AG04449 (cell line): ENCODE measurements at regions of chr14 and their contacts with region 1.

Region 1: DNA sequence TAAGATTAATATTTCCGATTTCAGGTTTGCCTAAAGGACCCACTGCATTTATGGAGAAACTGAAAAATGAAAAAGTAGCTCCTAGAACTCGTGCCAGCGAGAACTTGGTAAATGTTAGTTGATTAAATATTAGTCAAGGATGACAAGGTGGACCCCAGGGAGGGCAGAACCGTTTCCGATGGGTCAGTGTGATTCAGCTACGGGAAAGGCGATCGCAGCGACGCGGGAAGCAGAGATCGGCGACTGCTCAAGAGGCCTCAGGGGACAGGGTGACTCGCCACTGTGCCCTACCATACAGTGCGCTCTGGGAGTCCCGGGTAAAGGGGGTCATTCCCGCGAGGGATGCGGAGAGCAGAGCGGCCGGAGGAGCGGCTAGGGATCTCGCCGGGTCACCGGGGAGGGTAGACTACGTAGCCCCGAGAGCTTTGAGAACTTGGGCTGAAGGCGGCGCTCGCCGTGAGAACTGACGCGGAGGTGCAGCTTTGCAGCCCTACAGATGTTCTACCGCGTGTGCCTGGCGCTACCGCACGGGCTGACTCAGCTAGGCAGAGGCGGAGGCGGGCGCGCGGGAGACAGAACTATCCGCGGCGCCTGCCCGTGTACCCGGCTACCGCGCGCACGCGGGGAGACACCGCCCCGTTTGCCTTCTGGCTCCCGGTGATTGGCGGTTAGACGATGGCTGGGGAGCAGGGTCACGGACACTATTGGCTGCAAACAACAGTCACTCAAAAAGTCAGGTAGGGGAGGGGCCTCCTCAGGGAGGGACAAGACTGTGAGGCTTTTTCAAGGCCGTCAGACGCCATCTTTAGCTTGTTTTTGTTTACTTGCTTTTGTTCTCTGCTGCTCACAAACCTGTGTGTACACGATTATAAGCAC is 3.2 kb downstream of the C14orf93 start:
- DNase-seq: peak; percentile 86
- H3K4me3 ChIP-seq: peak overlapping the region; percentile 70
- CTCF ChIP-seq: peak; percentile 54

Region 2: DNA sequence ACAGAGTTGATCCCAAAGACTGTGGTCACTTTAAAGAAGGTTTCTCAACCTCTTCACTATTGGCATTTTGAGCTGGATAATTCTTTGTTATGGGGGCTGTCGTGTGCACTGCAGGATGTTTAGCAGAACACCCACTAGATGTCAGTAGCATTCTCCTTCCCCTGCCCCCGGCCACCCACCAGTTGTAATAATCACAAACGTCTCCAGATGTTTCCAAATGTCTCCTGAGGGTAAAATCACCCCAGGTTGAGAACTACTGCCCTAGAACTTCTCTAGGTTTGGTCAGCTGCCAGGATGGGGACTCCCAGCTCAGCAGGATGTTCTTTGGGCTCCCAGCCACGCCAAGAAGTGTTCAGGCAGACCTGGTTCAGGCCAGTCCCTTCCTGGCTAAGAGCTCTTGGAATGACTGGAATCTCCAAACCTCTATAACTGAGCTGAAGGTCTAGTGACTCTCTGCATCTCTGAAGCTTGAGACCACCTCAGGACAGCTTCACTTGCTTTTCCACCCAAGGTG is 12.0 kb before region 1 on chr14:
- CTCF ChIA-PET with region 1: interaction called, 70 read pairs
- POLR2A ChIA-PET with region 1: interaction called, 14 read pairs
- DNase-seq: no peak
- H3K4me3 ChIP-seq: no peak overlapping the region
- CTCF ChIP-seq: peak; percentile 65

Region 3: GRCh38 chr14:23025151-23025814 is 18.5 kb after region 1 on chr14:
- CTCF ChIA-PET with region 1: interaction called, 15 read pairs
- POLR2A ChIA-PET with region 1: interaction called, 13 read pairs
- DNase-seq: no peak
- H3K4me3 ChIP-seq: no peak overlapping the region
- CTCF ChIP-seq: no peak